ENCODE measurements at regions of chr7 and their contacts with region 1.

Region 1: GRCh38 chr7:92833024-92833765 is 3.2 kb downstream of the CDK6 start:
- DNase-seq: peak; percentile 88 to 94
- ATAC-seq: peak; percentile 79

Region 2: DNA sequence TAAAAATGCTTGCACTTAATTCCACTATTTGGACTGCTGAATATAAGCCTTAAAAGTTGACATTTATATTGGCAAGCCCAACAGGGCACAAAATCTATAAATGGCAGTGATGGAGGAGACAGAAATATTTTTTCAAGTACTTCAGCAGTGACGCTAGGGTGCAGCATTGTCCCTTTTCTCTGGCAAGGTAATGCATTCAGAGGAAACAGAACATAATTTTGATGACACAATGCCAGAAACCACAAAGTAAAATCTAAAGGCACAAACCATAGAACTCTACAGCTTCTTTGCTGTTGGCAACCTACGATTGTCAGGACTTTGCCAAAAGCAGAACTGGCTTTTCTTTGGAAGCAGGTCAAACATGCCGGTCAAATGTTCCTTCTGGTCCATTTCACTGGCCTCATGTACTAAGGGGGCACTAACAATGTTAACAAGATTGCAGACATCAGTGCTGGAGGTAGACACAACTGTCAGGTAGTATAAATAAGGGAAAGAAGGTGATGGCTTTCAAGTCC is 212.1 kb before region 1 on chr7:
- intact Hi-C with region 1: loop called in 1 of 2 experiments (anchors 10 kb)
- DNase-seq: peak; percentile 64 to 76
- ATAC-seq: peak; percentile 87

Region 3: DNA sequence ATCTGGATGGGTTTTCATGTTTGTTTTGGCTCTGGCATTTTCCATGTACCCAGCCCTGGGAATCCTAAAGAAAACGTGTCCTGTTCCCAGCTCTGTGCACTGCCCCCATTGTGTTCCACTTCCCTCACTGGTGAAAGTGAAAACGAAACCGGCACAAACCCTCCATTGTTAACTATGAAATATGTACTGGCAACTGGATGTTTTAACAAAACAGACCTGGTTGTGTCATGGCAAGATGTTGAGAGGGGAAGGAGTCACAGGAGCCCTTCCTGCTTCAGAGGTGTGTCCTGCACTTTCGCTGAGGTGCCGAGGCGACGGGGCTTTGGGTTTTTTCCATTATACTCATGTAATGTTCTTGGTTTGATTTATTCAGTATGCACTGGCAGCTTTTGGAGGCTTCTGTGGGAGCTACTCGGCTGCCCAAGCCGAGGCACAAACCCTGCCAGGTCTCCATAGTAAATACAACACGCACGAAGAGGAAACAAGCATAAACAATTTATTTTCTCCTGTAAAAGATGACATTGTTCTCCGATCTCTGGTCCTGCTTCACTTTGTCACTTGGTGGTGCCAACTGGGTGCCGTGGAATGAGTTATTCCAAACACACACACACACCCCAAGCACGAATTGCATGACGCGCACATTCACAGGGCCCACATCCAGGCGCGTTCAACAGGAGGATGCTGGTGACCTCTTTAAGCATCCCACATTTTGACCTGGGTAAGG is 115.0 kb before region 1 on chr7:
- intact Hi-C with region 1: loop called in 1 of 2 experiments (anchors 10 kb)
- DNase-seq: peak; percentile 41 to 73
- ATAC-seq: peak; percentile 88

Measured in left colon (tissue), 2 donors.